WTC11 (cell line): ENCODE measurements at regions of chr6 and their contacts with region 1.

Region 1: GRCh38 chr6:41039060-41039998 is at the start of gene UNC5CL:
- DNase-seq: peak; percentile 77
- ATAC-seq: peak; percentile 79
- H3K4me3 Mint-ChIP-seq: no peak within 1 kb of the TSS
- H3K27ac Mint-ChIP-seq: peak within 1 kb of the TSS; percentile 25; the same call in 1 of the 2 replicates
- H3K4me1 Mint-ChIP-seq: peaks cover 15% of the 10 kb centered on the region
- H3K27me3 Mint-ChIP-seq: no peaks in the 10 kb centered on the region
- CTCF ChIP-seq: peak; percentile 64
- total RNA-seq, gene UNC5CL: 3.3 to 4.5 TPM (median 3.6 TPM) in 3 replicates

Region 2: DNA sequence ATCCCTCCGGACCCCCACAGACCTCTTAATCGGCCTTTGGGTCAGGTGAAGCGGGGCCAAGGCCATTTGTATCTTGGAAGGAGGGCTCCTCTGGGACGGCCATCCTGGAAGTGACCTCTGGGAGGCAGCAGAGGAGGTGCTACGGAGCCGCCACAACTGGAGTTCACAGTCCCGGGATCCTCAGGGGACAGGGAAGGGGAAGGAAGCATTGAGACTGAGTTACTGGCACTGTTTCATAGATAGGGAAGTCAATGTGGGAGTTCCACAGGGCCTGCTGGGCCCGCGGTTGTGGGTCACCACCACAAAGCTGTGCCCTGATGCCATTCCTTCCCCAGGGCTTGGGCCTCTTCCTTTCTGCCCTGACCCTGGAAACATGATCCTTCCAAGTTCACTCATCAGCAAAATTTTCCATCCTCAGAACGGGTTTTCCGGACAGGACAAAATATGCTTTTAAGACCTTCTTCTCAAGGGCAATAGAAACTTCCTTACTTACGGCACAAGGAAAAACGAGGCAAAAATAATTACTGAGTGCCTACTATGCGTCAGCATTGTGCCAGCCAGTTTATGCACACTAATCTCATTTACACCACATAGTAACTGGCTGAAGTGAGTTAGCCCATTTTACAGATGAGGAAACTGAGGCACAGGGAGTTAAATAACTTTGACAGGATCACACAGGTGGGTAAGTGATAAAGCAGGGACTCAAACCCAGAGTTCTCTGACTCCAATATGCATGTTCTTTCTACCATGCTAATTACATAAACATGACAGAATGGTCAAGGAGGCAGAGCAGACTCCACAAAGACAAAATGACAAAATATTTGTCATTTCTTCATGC is 144.1 kb before region 1 on chr6:
- CTCF ChIA-PET with region 1: interaction called, 19 read pairs
- POLR2A ChIA-PET with region 1: no interaction called
- DNase-seq: peak; percentile 82
- ATAC-seq: peak; percentile 99
- H3K4me3 Mint-ChIP-seq: no peak overlapping the region
- H3K27ac Mint-ChIP-seq: no peak overlapping the region
- H3K4me1 Mint-ChIP-seq: peaks cover 12% of the 10 kb centered on the region
- H3K27me3 Mint-ChIP-seq: peaks cover 47% of the 10 kb centered on the region
- CTCF ChIP-seq: peak; percentile 30; the same call in 1 of the 2 replicates

Region 3: DNA sequence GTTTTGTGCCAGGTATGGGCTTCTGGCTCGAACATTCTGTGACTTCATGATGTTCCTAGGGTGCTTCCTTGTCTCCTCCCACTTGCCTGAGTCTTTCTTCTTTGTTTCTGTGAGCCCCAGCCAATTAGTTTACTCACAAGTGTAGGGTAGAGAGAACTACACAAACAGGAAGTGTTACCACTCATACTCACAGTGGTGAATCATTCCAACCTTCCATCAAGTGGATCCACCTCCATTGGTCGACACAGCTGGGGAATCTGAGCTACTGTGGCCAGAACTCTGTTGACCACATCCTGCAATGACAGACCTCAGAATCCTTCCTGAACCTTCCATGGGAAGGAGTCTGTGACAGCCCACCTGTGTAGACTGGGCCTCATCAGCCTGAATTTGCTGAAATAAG is 77.1 kb before region 1 on chr6:
- CTCF ChIA-PET with region 1: no interaction called
- POLR2A ChIA-PET with region 1: no interaction called
- DNase-seq: no peak
- ATAC-seq: peak; percentile 44; the same call in 1 of the 2 replicates
- H3K4me3 Mint-ChIP-seq: no peak overlapping the region
- H3K27ac Mint-ChIP-seq: no peak overlapping the region; the same call in 1 of the 2 replicates
- H3K4me1 Mint-ChIP-seq: peaks cover 19% of the 10 kb centered on the region
- H3K27me3 Mint-ChIP-seq: peaks cover 7% of the 10 kb centered on the region; the same call in 1 of the 2 replicates
- CTCF ChIP-seq: no peak

Region 4: GRCh38 chr6:41053041-41053440 is 13.7 kb after region 1 on chr6 and contains the start of gene APOBEC2:
- CTCF ChIA-PET with region 1: interaction called, 26 read pairs
- POLR2A ChIA-PET with region 1: no interaction called
- DNase-seq: no peak
- ATAC-seq: no peak; the same call in 1 of the 2 replicates
- H3K4me3 Mint-ChIP-seq: no peak within 1 kb of the TSS
- H3K27ac Mint-ChIP-seq: no peak within 1 kb of the TSS
- H3K4me1 Mint-ChIP-seq: peaks cover 23% of the 10 kb centered on the region
- H3K27me3 Mint-ChIP-seq: no peaks in the 10 kb centered on the region
- CTCF ChIP-seq: no peak
- total RNA-seq, gene APOBEC2: not detected in 3 replicates

Region 5: DNA sequence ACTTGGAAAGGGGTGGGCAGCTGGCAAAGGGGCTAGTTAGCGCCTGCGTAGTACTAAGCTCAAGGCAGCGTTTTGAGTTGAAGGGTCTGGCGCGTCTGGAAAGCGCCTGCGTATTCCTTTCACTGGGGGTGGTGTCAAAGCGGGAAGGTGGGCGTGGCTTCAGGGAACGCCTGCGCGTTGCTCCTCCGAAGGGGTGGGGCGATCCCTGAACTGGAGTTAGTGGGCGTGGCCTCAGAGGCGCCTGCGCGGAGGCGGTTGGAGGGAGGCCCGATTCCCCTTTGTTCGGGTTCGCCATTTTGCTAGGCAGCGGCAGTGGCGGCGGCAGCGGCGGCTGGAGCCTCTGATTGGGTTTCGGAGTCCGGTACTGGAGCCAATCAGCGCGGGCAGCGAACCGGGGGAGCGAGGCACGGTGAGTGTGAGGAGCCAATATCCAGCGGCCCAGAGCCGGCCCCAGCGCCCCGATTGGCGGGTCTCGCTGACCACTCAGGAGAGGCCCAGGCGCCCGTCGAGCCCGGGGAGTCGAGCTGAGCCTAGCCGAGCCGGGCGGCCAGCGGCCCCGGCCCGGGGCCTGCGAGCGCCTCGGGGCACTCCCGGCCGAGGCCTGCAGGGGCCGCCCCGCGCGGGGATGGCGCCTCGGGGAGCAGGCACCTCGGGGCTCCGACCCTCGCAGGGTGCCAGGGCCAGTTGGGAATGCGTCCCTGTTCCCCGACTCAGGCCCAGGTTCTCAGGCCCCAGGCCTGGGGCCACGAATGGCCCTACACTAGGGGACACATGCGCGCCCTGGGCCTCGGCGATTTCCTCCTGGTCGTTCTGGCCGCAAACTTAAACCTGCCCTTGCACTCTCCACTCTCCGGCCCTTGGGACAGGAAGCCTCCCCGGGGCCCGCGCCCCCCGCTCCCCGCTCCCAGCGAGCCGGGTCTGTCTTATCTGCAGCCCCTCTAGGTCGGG is 33.6 kb after region 1 on chr6 and contains the start of gene NFYA:
- CTCF ChIA-PET with region 1: interaction called, 12 read pairs
- POLR2A ChIA-PET with region 1: no interaction called
- DNase-seq: peak; percentile 100
- ATAC-seq: peak; percentile 81
- H3K4me3 Mint-ChIP-seq: peak within 1 kb of the TSS; percentile 94
- H3K27ac Mint-ChIP-seq: peak within 1 kb of the TSS; percentile 98
- H3K4me1 Mint-ChIP-seq: peaks cover 40% of the 10 kb centered on the region
- H3K27me3 Mint-ChIP-seq: no peaks in the 10 kb centered on the region
- CTCF ChIP-seq: peak; percentile 54
- total RNA-seq, gene NFYA: 34.7 to 37.7 TPM (median 35.8 TPM) in 3 replicates